ENCODE measurements at regions of chr9 and their contacts with region 1.

Region 1: GRCh38 chr9:15552636-15553527 is at the start of gene CCDC171:
- DNase-seq: peak; percentile 95
- H3K4me3 ChIP-seq: peak within 1 kb of the TSS; percentile 82
- H3K27ac ChIP-seq: peak within 1 kb of the TSS; percentile 87
- H3K4me1 ChIP-seq: peaks cover 41% of the 10 kb centered on the region
- CTCF ChIP-seq: no peak
- total RNA-seq, gene CCDC171: 10.4 and 11.6 TPM in 2 replicates

Region 2: DNA sequence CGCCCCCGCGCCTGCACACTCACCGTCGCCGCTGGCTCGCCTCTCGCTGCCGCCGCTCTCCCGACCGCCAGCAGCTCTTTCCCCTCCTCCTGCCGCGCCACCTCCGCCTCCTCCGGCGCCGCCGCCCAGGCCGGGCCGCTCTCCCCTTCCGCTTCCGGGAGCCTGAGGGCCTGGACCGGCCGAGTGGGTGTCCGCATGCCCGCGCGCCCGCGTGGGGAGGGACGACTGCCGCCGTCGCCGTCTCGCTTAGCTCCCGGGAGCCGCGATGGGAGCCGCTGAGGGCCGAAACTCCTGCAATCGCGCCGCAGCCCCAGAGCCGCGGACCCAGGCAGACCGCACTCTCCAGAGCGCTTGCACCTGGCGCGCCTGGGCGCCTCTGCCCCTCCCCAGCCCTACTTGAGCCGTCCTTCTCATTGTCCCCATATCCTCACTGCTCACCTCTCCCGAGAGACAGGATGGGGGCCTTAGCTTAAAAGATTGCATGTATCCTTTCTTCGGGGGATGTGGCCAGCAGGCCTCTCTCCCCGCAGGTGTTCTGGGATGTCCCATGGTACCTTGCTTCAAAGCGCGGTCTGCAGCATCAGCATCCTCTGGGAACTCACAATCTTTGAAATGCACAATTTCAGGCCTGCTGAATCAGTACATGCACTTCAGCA is 859.5 kb before region 1 on chr9 and contains the start of gene ZDHHC21:
- CTCF ChIA-PET with region 1: no interaction called
- POLR2A ChIA-PET with region 1: no interaction called
- intact Hi-C with region 1: loop called (anchors 5 kb)
- DNase-seq: peak; percentile 72
- H3K4me3 ChIP-seq: peak within 1 kb of the TSS; percentile 79
- H3K27ac ChIP-seq: peak within 1 kb of the TSS; percentile 88
- H3K4me1 ChIP-seq: peaks cover 38% of the 10 kb centered on the region
- CTCF ChIP-seq: no peak
- total RNA-seq, gene ZDHHC21: 12.6 and 13.0 TPM in 2 replicates

Region 3: DNA sequence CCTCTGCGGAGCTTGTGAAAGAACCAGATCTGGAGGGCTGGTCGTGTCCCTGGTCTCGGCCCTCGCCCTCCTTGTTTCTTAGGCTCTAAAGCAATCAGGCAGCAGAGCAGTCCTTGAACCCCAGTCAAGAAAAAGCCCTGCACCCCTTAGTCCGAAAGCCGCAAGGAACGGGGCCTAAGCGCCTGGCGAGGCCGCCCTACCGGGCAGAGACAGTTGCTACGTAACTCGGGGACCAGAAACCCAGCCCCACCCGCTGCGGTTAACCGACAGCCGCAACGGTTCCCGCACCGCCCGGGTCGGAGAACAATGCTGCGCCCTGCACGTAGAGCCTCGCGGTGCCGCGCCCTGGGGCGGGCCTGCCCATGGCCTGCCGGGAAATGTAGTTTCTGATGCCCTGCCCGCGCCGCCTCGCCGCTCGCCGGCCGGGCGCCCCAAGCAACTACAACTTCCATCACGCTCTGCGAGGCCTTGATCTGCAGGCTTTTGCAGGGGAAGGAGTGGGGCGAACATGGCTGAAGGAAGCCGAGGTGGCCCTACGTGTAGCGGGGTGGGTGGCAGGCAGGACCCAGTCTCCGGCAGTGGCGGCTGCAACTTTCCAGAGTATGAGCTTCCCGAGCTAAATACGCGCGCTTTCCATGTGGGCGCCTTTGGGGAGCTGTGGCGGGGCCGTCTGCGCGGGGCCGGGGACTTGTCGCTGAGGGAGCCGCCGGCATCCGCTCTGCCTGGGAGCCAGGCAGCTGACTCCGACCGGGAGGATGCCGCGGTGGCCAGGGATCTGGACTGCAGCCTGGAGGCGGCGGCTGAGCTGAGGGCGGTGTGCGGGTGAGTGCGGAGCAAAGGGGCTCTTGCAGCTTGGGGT is 130.3 kb before region 1 on chr9 and contains the start of gene SNAPC3:
- CTCF ChIA-PET with region 1: no interaction called
- POLR2A ChIA-PET with region 1: interaction called, 5 read pairs
- intact Hi-C with region 1: loop called (anchors 2 kb)
- DNase-seq: peak; percentile 95
- H3K4me3 ChIP-seq: peak within 1 kb of the TSS; percentile 90
- H3K27ac ChIP-seq: peak within 1 kb of the TSS; percentile 68
- H3K4me1 ChIP-seq: peaks cover 40% of the 10 kb centered on the region
- CTCF ChIP-seq: no peak
- total RNA-seq, gene SNAPC3: 54.2 and 66.1 TPM in 2 replicates

Region 4: DNA sequence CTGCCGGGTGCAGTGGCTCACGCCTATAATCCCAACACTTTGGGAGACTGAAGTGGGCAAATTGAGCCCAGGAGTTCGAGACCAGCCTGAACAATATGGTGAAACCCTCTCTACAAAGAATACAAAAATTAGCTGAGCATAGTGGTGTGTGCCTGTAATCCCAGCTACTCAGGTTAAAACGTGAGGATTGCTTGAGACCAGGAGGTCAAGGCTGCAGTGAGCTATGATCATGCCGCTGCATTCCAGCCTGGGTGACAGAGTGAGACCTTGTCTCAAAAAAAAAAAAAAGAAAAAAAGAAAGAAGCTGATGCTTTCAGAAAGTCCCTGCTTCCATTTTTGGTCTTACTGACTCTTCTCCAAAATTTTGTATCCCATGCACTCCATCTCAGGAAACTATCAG is 98.9 kb before region 1 on chr9:
- CTCF ChIA-PET with region 1: interaction called, 3 read pairs
- POLR2A ChIA-PET with region 1: interaction called, 10 read pairs
- intact Hi-C with region 1: no loop called
- DNase-seq: no peak
- H3K4me3 ChIP-seq: no peak overlapping the region
- H3K27ac ChIP-seq: no peak overlapping the region
- H3K4me1 ChIP-seq: no peaks in the 10 kb centered on the region
- CTCF ChIP-seq: no peak

Region 5: DNA sequence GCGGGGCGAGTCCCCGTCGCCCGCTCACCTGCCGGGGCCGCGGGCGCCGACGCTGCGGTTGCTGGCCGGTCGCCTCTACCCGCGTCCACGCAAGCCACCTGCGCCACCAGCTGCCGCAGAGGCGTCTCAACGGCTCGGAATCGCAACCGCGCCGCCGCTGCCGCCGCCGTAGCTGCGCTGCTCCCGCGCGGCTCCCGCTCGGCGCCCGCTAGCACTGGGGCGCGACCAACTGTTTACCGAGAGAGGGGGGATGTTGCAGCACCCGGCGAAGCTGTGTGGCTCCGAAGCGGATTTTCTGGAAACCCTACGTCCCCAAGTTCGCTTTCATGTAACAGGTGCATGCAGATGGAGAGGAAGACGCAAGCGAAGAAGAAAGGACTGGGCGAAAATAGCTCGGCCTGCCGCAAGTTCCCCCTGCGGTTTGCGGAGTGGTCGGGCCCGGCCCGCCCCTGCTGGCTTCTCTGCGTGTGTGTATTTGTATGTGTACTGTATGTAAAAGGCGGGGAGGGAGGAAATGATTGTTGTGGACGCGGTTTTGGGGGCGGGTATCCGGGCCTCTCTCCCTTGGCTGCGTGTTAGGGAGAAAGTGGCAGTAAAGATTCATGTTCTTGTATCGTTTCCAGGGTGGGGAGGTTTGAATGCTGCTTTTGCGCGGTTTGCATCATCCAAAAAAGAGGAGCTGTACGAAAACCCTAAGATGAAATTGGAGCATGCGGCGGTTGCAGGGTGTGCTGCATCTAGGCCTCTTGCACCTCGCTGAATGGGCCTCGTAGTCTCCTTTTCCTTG is 41.9 kb before region 1 on chr9 and contains the start of gene PSIP1:
- CTCF ChIA-PET with region 1: interaction called, 6 read pairs
- POLR2A ChIA-PET with region 1: interaction called, 110 read pairs
- intact Hi-C with region 1: loop called (anchors 1 kb)
- DNase-seq: peak; percentile 94
- H3K4me3 ChIP-seq: peak within 1 kb of the TSS; percentile 99
- H3K27ac ChIP-seq: peak within 1 kb of the TSS; percentile 82
- H3K4me1 ChIP-seq: peaks cover 47% of the 10 kb centered on the region
- CTCF ChIP-seq: 0 out of 2 replicates have a peak, but pooled peaks have one; percentile 19
- total RNA-seq, gene PSIP1: 132 and 146 TPM in 2 replicates